CD4-positive, alpha-beta memory T cell (primary cell): ENCODE measurements at regions of chr3 and their contacts with region 1.

Region 1: DNA sequence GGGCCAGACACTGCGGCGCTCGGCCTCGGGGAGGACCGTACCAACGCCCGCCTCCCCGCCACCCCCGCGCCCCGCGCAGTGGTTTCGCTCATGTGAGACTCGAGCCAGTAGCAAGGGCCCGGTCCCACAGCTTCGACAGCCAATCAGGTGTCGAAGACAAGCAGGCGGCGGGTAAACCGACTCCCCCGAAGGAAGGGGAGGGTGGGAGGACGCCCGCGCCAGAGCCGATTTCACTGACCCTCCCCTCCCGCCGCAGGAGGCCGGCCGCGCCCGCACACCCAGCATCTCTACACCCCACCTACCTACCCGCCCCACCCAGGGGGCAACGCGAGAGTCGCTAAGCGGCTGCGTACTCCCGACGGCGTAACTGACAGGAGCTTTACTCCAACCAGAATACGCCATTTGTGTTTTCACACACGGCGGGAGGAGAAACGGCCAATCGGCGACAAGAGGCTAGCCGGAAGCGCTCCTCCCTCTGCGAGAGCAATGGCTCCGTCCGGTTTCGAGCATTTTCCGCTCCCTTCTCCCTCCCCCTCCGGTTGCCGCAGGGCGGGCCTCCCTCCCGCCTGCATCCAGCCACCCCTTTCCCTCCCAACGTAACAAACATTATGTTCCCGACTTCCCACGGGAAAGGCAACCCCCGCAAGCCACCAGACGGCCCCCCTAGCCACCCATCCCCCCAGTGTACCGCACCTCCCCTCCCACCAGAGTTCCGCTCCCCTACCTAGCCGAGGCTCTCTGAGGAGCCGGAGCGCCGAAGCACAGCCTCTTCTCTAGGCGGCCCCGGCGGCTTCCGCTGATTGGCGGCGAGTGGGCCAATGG is 504 bp upstream of the SETD5 start:
- DNase-seq: peak; percentile 99 to 100 (median 100)
- H3K4me3 ChIP-seq: peak overlapping the region in 1 of 2 donors; percentile 71
- H3K4me3 Mint-ChIP-seq: peak overlapping the region; percentile 90 to 99 (median 96)
- H3K27ac ChIP-seq: peak overlapping the region; percentile 83
- H3K27ac Mint-ChIP-seq: peak overlapping the region; percentile 96 to 99 (median 99)
- H3K4me1 ChIP-seq: peaks cover 73% of the 10 kb centered on the region
- H3K4me1 Mint-ChIP-seq: peaks cover 49 to 87% (median 68%) of the 10 kb centered on the region in 4 donors
- H3K27me3 ChIP-seq: no peaks in the 10 kb centered on the region
- H3K27me3 Mint-ChIP-seq: peaks cover 0 to 3% of the 10 kb centered on the region in 2 donors

Region 2: GRCh38 chr3:8416965-8417364 is 979.9 kb before region 1 on chr3:
- CTCF ChIA-PET with region 1: no interaction called
- POLR2A ChIA-PET with region 1: no interaction called
- intact Hi-C with region 1: no loop called
- DNase-seq: no peak
- H3K4me3 ChIP-seq: no peak overlapping the region
- H3K4me3 Mint-ChIP-seq: peak overlapping the region in 1 of 8 donors; percentile 7
- H3K27ac ChIP-seq: no peak overlapping the region
- H3K27ac Mint-ChIP-seq: peak overlapping the region in 3 of 7 donors; percentile 39 to 77 (median 48)
- H3K4me1 ChIP-seq: peaks cover 8% of the 10 kb centered on the region
- H3K4me1 Mint-ChIP-seq: peaks cover 6 to 10% (median 6%) of the 10 kb centered on the region in 4 donors
- H3K27me3 ChIP-seq: no peaks in the 10 kb centered on the region
- H3K27me3 Mint-ChIP-seq: no peaks in the 10 kb centered on the region

Region 3: DNA sequence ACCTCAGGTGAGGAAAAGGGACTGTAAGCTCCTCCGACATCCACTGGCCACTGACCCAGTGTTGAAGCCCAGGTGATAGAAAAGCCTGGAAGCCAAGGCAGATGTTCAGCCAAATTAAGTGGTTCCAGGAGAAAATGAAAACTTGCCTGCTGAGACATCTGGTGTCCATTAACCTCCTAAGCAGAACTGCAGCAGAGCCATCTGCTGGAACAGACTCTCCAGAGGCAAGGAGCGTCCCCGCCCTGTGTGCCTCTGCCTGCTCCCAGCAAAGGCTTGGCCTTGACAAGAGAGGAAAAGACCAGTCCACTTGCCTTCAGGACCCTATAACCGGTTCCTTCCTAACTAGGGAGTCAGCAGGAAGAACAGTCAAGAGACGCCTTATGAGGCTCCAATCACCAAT is 195.6 kb before region 1 on chr3:
- CTCF ChIA-PET with region 1: no interaction called
- POLR2A ChIA-PET with region 1: no interaction called
- intact Hi-C with region 1: no loop called
- DNase-seq: no peak
- H3K4me3 ChIP-seq: no peak overlapping the region
- H3K4me3 Mint-ChIP-seq: no peak overlapping the region
- H3K27ac ChIP-seq: no peak overlapping the region
- H3K27ac Mint-ChIP-seq: peak overlapping the region in 1 of 7 donors; percentile 36
- H3K4me1 ChIP-seq: no peaks in the 10 kb centered on the region
- H3K4me1 Mint-ChIP-seq: no peaks in the 10 kb centered on the region
- H3K27me3 ChIP-seq: no peaks in the 10 kb centered on the region
- H3K27me3 Mint-ChIP-seq: peaks cover 0 to 4% of the 10 kb centered on the region in 2 donors

Region 4: GRCh38 chr3:9352917-9353752 is 43.8 kb before region 1 on chr3:
- CTCF ChIA-PET with region 1: interaction called, 7 read pairs
- POLR2A ChIA-PET with region 1: interaction called, 4 read pairs
- intact Hi-C with region 1: loop called (anchors 2 kb)
- DNase-seq: peak; percentile 45 to 61 (median 55)
- H3K4me3 ChIP-seq: no peak overlapping the region
- H3K4me3 Mint-ChIP-seq: no peak overlapping the region
- H3K27ac ChIP-seq: no peak overlapping the region
- H3K27ac Mint-ChIP-seq: peak overlapping the region in 1 of 7 donors; percentile 26
- H3K4me1 ChIP-seq: no peaks in the 10 kb centered on the region
- H3K4me1 Mint-ChIP-seq: peaks cover 10 to 16% (median 13%) of the 10 kb centered on the region in 4 donors
- H3K27me3 ChIP-seq: no peaks in the 10 kb centered on the region
- H3K27me3 Mint-ChIP-seq: no peaks in the 10 kb centered on the region

Region 5: GRCh38 chr3:9384141-9384853 is 12.6 kb before region 1 on chr3:
- CTCF ChIA-PET with region 1: interaction called, 7 read pairs
- POLR2A ChIA-PET with region 1: interaction called, 61 read pairs
- intact Hi-C with region 1: loop called (anchors 2 kb)
- DNase-seq: no peak
- H3K4me3 ChIP-seq: no peak overlapping the region
- H3K4me3 Mint-ChIP-seq: no peak overlapping the region
- H3K27ac ChIP-seq: no peak overlapping the region
- H3K27ac Mint-ChIP-seq: peak overlapping the region in 5 of 7 donors; percentile 0 to 90 (median 54)
- H3K4me1 ChIP-seq: peaks cover 1% of the 10 kb centered on the region
- H3K4me1 Mint-ChIP-seq: peaks cover 12 to 28% (median 21%) of the 10 kb centered on the region in 4 donors
- H3K27me3 ChIP-seq: no peaks in the 10 kb centered on the region
- H3K27me3 Mint-ChIP-seq: no peaks in the 10 kb centered on the region

Region 6: DNA sequence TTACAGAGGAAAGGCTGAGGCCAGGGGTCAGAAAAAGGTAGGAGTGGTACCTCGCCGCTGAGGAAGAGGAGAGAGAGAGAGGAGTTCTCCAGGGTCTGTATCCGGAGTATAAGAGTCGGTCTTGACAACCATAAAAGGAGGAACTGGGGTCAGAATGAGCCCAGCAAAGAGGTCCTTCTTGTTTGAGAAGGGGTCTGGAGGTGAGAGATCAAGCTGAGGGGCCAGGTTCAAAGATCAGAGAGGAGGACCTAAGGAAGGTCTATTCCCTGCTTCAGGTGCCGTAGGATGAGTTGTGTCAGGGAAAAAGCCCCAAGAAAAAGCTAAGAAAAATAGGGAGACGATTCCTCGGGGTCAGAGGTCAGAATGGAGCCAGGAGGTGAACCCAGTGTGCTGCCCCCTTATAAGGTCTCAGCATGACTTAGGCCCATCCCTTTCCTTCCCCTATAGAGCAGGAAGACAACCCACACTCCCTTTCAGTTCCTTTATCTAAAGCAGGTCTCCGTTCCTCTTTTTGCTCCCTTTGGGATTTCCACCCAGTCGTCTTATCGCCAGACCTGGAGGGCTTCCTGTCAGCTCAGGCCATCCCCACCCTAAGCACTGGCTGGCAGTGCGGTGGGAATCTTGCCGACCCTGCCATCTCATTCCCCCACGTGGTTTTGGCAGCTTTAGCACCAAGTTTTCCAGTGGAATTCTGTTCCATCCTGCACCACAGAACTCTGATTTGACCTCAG is 253.0 kb after region 1 on chr3:
- CTCF ChIA-PET with region 1: no interaction called
- POLR2A ChIA-PET with region 1: interaction called, 19 read pairs
- intact Hi-C with region 1: loop called (anchors 1 kb)
- DNase-seq: peak in 1 of 5 donors; percentile 46
- H3K4me3 ChIP-seq: peak overlapping the region; percentile 97
- H3K4me3 Mint-ChIP-seq: peak overlapping the region; percentile 91 to 99 (median 96)
- H3K27ac ChIP-seq: peak overlapping the region; percentile 77
- H3K27ac Mint-ChIP-seq: peak overlapping the region; percentile 89 to 97 (median 91)
- H3K4me1 ChIP-seq: peaks cover 37% of the 10 kb centered on the region
- H3K4me1 Mint-ChIP-seq: peaks cover 19 to 50% (median 30%) of the 10 kb centered on the region in 4 donors
- H3K27me3 ChIP-seq: no peaks in the 10 kb centered on the region
- H3K27me3 Mint-ChIP-seq: peaks cover 0 to 1% of the 10 kb centered on the region in 2 donors

Region 7: GRCh38 chr3:9704347-9705322 is 307.7 kb after region 1 on chr3:
- CTCF ChIA-PET with region 1: no interaction called
- POLR2A ChIA-PET with region 1: no interaction called
- intact Hi-C with region 1: no loop called
- DNase-seq: peak in 1 of 5 donors; percentile 8
- H3K4me3 ChIP-seq: no peak overlapping the region
- H3K4me3 Mint-ChIP-seq: peak overlapping the region; percentile 17 to 73 (median 56)
- H3K27ac ChIP-seq: no peak overlapping the region
- H3K27ac Mint-ChIP-seq: peak overlapping the region in 1 of 7 donors; percentile 18
- H3K4me1 ChIP-seq: peaks cover 10% of the 10 kb centered on the region
- H3K4me1 Mint-ChIP-seq: peaks cover 5 to 25% (median 9%) of the 10 kb centered on the region in 4 donors
- H3K27me3 ChIP-seq: no peaks in the 10 kb centered on the region
- H3K27me3 Mint-ChIP-seq: peaks cover 10 to 17% of the 10 kb centered on the region in 2 donors

Region 8: DNA sequence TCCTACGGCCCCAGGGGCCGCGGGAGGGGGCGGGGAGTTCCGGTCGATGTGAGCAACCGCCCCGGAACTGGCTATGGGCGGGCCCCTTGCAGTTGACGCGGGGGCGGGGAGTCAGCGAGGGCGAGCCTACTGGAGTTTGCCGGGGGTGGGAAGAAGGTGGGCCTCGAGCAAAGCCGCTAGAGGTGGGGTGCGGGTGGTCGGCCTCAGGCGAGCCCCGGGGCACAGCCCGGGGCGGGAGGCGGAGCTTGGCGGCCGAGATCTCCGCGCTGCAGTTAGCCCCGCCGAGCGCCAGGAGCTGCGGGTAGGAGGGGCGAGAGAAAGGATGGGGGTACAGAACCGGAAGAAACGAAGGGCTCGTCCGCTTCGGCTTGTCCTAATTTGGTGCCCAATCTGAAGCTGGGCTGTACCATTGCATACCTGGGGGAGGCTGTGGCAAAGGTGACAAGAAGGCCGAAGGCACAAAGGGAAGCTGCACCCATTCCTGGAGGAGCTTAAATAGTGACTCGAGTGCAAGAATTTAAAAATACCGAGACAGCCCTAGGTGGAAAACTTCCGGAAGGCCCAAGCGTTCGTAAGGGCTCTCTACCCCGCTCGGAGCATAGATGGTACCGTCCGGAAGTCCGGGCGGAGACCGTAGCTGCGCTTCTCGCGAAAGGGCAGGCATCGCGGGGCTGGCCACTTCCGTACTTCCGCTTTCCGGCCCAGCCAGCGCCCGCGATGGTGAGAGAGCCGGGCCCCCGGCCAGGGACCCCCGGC is 395.7 kb after region 1 on chr3 and contains the starts of genes ARPC4 and TADA3:
- CTCF ChIA-PET with region 1: no interaction called
- POLR2A ChIA-PET with region 1: interaction called, 13 read pairs
- intact Hi-C with region 1: no loop called
- DNase-seq: peak; percentile 92 to 97 (median 96)
- H3K4me3 ChIP-seq: peak within 1 kb of the TSS; percentile 91 to 100
- H3K4me3 Mint-ChIP-seq: peak within 1 kb of the TSS; percentile 96 to 99 (median 98)
- H3K27ac ChIP-seq: peak within 1 kb of the TSS; percentile 99
- H3K27ac Mint-ChIP-seq: peak within 1 kb of the TSS; percentile 97 to 99 (median 99)
- H3K4me1 ChIP-seq: peaks cover 63% of the 10 kb centered on the region
- H3K4me1 Mint-ChIP-seq: peaks cover 47 to 80% (median 56%) of the 10 kb centered on the region in 4 donors
- H3K27me3 ChIP-seq: no peaks in the 10 kb centered on the region
- H3K27me3 Mint-ChIP-seq: no peaks in the 10 kb centered on the region
- total RNA-seq, gene ARPC4: 164 to 168 TPM
- total RNA-seq, gene TADA3: 37.6 to 41.4 TPM

Region 9: DNA sequence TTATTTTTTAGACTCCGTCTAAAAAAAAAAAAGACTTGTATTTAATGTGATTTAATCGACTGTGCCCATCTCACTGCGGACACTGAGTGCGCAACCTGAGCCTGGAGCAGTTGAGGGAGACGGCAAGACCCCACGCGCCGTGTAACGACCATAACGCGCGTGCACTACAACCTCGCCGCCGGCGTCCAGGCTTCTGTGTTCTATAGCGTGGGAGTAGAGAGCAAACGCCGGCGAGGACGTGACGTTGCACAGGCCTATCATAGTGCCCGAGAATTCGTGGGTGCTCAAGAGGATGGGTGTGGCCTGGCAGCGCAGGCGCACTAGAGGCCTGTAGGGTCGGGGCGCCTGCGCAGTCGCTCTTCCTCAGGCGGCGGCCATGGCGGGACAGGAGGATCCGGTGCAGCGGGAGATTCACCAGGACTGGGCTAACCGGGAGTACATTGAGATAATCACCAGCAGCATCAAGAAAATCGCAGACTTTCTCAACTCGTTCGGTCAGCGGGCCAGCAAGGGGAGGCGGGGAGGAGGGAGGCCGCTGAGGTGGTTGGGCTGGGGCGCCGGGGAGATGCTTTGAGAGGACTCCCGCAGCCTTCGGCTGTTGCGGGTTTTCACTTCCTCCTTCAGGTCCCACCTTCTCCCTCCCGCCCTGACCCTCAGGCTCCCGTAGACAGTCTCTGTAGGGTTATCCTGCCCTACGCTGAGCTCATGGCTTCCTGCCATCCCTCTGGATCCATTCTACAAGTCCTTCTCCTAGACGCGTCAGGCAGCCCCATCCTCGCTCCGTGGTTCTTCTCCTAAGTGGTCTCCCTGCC is 718.6 kb after region 1 on chr3 and contains the start of gene BRK1:
- CTCF ChIA-PET with region 1: no interaction called
- POLR2A ChIA-PET with region 1: no interaction called
- intact Hi-C with region 1: loop called (anchors 2 kb)
- DNase-seq: peak; percentile 89 to 95 (median 93)
- H3K4me3 ChIP-seq: peak within 1 kb of the TSS; percentile 89 to 98
- H3K4me3 Mint-ChIP-seq: peak within 1 kb of the TSS; percentile 95 to 100 (median 99)
- H3K27ac ChIP-seq: peak within 1 kb of the TSS; percentile 84
- H3K27ac Mint-ChIP-seq: peak within 1 kb of the TSS; percentile 96 to 100 (median 98)
- H3K4me1 ChIP-seq: peaks cover 39% of the 10 kb centered on the region
- H3K4me1 Mint-ChIP-seq: peaks cover 22 to 52% (median 31%) of the 10 kb centered on the region in 4 donors
- H3K27me3 ChIP-seq: no peaks in the 10 kb centered on the region
- H3K27me3 Mint-ChIP-seq: peaks cover 0 to 1% of the 10 kb centered on the region in 2 donors
- total RNA-seq, gene BRK1: 73.0 to 78.1 TPM